ENCODE measurements at regions of chr12 and their contacts with region 1.

Region 1: GRCh38 chr12:47837190-47838171 is 17.8 kb upstream of the HDAC7 start:
- DNase-seq: peak; percentile 77
- ATAC-seq: no peak
- H3K4me3 Mint-ChIP-seq: peak overlapping the region; percentile 31
- H3K27ac Mint-ChIP-seq: peak overlapping the region; percentile 79
- H3K4me1 Mint-ChIP-seq: peaks cover 57% of the 10 kb centered on the region
- H3K27me3 Mint-ChIP-seq: no peaks in the 10 kb centered on the region
- CTCF ChIP-seq: peak; percentile 96

Region 2: GRCh38 chr12:47715393-47715876 is 122.0 kb before region 1 on chr12:
- CTCF ChIA-PET with region 1: interaction called, 96 read pairs
- POLR2A ChIA-PET with region 1: interaction called, 3 read pairs
- intact Hi-C with region 1: loop called (anchors 2 kb)
- DNase-seq: peak; percentile 91
- ATAC-seq: peak; percentile 88
- H3K4me3 Mint-ChIP-seq: no peak overlapping the region
- H3K27ac Mint-ChIP-seq: no peak overlapping the region
- H3K4me1 Mint-ChIP-seq: peaks cover 19% of the 10 kb centered on the region
- H3K27me3 Mint-ChIP-seq: no peaks in the 10 kb centered on the region
- CTCF ChIP-seq: peak; percentile 71

Region 3: GRCh38 chr12:47773062-47773857 is 64.2 kb before region 1 on chr12 and contains the start of gene SLC48A1:
- CTCF ChIA-PET with region 1: interaction called, 164 read pairs
- POLR2A ChIA-PET with region 1: interaction called, 4 read pairs
- intact Hi-C with region 1: loop called (anchors 5 kb)
- DNase-seq: peak; percentile 64
- ATAC-seq: peak; percentile 71
- H3K4me3 Mint-ChIP-seq: peak within 1 kb of the TSS; percentile 87
- H3K27ac Mint-ChIP-seq: peak within 1 kb of the TSS; percentile 52
- H3K4me1 Mint-ChIP-seq: peaks cover 16% of the 10 kb centered on the region
- H3K27me3 Mint-ChIP-seq: no peaks in the 10 kb centered on the region
- CTCF ChIP-seq: no peak
- total RNA-seq, gene SLC48A1: 8.8 to 10.2 TPM

Region 4: DNA sequence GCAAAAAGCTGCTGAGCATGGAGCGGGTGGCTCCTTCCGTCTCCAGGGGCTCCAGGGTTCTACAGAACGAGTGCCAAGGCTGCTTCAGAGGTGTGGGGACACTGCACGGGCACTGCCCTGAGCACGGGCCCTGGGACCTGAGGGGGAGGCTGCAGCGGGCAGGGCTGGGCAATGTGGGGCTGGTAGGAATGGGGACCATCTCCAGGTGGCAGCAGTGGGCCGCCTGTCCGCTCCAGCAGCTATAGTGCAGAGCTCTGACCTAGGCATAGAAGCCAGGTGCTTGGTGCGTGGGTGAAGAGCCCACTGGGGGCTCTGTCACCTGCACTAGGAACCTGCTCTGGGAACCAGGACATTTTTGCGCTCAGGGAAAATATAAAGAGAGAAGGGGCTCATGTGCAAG is 40.0 kb before region 1 on chr12:
- CTCF ChIA-PET with region 1: interaction called, 624 read pairs
- POLR2A ChIA-PET with region 1: interaction called, 904 read pairs
- intact Hi-C with region 1: loop called (anchors 5 kb)
- DNase-seq: peak; percentile 56
- ATAC-seq: peak; percentile 57
- H3K4me3 Mint-ChIP-seq: no peak overlapping the region
- H3K27ac Mint-ChIP-seq: peak overlapping the region; percentile 46
- H3K4me1 Mint-ChIP-seq: peaks cover 41% of the 10 kb centered on the region
- H3K27me3 Mint-ChIP-seq: no peaks in the 10 kb centered on the region
- CTCF ChIP-seq: peak; percentile 19

Region 5: DNA sequence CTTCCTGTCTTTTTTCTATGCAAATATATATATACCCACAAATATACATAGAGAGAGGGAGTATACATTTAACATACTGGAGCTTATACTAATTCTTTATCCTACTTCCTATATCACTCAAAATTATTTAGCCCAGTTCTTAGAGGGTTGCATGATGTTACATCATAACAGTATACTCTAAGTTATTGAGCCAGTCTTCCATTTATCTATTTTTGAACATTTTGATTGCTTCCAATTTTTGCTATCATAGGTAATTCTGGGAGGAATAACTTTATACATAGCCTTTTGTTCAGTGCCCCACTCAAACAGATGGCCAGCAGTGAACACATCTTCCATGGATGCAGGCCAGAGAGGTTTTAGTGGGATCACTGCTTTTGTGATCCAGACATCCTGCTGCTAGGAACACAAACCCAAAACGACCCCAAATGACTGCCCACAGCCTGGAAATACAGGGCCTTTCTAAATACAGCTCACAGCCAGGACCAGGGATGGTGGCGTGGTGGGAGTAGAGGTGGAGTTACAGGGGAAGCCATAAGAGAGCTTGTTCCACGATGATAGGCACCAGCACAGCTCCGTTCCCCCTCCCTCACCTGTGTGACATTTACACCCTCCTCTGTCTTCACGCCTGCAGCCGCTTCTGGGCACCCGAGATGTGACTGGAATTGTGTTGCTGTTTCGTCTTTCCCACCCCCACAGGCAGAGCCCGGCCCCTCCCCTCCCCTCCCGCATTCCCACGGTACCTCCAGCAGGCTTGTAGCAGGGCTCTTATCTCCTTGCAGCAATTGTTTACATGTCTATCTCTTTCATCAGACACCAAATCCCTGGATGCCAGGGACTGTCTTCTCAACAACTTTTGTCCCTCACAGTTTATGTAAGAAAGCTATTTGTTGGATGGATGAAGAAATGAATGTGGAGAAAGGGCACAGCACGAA is 12.9 kb after region 1 on chr12:
- CTCF ChIA-PET with region 1: interaction called, 25 read pairs
- POLR2A ChIA-PET with region 1: interaction called, 3 read pairs
- intact Hi-C with region 1: no loop called
- DNase-seq: no peak
- ATAC-seq: no peak
- H3K4me3 Mint-ChIP-seq: no peak overlapping the region
- H3K27ac Mint-ChIP-seq: no peak overlapping the region
- H3K4me1 Mint-ChIP-seq: peaks cover 11% of the 10 kb centered on the region
- H3K27me3 Mint-ChIP-seq: no peaks in the 10 kb centered on the region
- CTCF ChIP-seq: no peak

Region 6: DNA sequence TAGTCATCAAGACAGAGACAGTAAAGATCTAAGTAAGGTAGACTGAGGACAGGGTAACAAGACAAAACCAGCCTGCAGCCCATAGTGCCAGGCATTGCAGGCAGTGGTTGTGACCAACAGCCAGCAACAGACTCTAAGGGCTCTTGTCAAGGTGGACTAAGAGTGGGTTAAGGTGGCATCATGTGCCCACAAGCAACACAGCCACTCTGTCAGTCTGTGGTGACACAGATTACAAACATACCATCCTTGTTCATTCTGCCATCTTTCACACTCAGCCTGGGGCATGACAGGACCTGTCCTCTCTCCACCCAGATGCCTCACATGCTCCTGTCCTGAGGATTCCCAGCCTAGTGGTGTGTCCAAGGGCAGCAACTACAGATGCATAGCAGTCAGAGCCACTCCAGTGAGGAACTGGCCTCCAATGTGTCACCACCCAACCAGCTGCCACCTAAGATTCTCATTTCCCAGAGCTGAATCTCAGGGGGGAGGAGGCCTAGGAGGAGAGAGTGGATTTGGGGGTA is 39.0 kb after region 1 on chr12:
- CTCF ChIA-PET with region 1: interaction called, 10 read pairs
- POLR2A ChIA-PET with region 1: interaction called, 5 read pairs
- intact Hi-C with region 1: no loop called
- DNase-seq: no peak
- ATAC-seq: no peak
- H3K4me3 Mint-ChIP-seq: no peak overlapping the region
- H3K27ac Mint-ChIP-seq: no peak overlapping the region
- H3K4me1 Mint-ChIP-seq: peaks cover 28% of the 10 kb centered on the region
- H3K27me3 Mint-ChIP-seq: no peaks in the 10 kb centered on the region
- CTCF ChIP-seq: no peak